ENCODE measurements at regions of chr6 and their contacts with region 1.

Region 1: DNA sequence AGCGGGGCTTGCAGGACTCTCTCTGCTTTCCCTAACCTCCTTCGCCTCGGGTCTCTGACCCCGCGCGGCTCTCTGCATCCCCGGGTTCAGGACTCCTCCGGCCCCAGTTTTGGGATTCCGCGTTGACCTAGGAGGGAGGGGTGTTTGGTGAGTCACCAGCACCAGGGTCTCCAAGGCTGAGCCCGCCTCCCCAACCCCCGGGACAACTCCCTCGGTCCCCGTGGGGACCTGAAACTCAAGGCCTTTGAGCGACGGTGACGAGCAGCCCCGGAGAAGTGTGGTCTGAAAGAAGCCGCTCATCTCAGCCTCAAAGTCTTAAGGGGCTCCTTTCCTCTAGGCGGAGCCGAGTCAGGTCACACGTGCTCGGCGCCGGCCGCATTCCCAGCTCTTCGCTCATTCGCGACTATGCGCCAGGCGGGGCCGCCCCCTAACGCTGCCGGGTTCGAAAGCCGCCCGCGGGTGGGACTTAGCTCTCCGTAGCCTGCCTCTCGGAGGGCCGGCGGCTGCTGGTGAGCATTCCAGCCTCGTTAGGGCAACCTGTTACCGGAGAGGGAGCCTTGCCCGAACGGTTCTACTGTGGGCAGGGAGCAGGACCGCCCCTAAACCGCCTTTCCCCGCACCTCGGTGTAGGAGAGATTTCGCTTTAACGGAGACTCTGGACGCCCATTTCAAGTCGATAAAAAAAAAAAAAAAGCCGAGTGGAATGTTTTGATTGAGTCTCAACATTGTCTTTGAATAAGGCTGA is 3.0 kb upstream of the PRDM13 start:
- DNase-seq: peak in 1 of 2 donors; percentile 54
- ATAC-seq: peak; percentile 31 to 59 (median 46)
- H3K4me3 ChIP-seq: peak overlapping the region; percentile 13
- H3K4me3 Mint-ChIP-seq: peak overlapping the region; percentile 80
- H3K27ac ChIP-seq: no peak overlapping the region
- H3K27ac Mint-ChIP-seq: no peak overlapping the region
- H3K4me1 ChIP-seq: peaks cover 38% of the 10 kb centered on the region
- H3K4me1 Mint-ChIP-seq: peaks cover 34 to 35% of the 10 kb centered on the region in 2 donors
- H3K27me3 ChIP-seq: peaks cover 80% of the 10 kb centered on the region
- H3K27me3 Mint-ChIP-seq: peaks cover 80 to 94% of the 10 kb centered on the region in 2 donors
- CTCF ChIP-seq: no peak

Region 2: DNA sequence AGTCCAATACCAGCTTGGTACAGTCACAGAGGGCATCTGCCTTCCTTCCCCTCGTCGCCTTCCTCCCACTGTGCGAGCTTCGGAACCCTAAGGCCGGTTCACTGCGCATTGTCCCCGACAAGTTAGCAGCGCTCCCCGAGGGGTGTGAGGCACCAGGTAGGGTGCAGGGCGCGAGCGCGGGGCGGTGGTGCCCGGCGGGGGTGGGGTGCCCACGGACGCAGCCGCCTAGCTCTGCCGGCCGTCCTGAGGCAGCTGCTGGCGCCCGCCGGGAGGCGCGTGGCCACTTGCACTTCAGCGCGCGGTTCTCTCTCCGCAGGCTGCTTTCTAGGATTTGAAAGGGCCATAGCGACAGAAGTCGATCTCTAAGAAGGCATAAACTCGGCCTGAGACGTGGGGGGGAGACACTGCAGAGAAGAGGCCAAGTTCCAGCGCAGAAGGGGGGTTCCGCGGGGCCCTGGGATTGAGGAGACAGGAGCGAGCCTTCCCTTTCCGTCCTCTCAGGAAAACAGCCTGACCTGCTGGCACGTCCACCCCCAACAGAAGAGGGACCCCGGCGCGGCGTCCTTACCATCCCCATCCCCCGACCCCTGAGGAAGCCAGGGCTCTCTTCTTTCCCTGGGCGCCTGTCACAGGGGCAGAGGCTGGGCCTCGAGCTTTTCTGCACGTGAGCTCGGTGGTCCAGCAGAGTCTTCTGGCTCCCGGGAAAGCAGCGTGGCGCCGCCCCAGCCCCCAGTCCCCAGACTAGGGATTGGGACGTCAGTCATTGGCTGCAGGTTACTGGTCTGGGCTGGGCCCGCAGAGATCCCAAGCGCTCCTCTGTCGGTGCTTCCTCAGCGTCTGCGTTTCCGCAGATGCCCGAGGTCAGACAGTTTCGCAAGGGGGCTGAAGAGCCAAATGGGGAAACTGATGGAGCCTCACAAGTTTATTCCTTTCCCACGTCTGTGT is 12.6 kb before region 1 on chr6:
- intact Hi-C with region 1: loop called (anchors 2 kb)
- DNase-seq: peak in 1 of 2 donors; percentile 23
- ATAC-seq: no peak
- H3K4me3 ChIP-seq: no peak overlapping the region
- H3K4me3 Mint-ChIP-seq: no peak overlapping the region
- H3K27ac ChIP-seq: no peak overlapping the region
- H3K27ac Mint-ChIP-seq: no peak overlapping the region
- H3K4me1 ChIP-seq: peaks cover 21% of the 10 kb centered on the region
- H3K4me1 Mint-ChIP-seq: peaks cover 8 to 10% of the 10 kb centered on the region in 2 donors
- H3K27me3 ChIP-seq: peaks cover 66% of the 10 kb centered on the region
- H3K27me3 Mint-ChIP-seq: peaks cover 62 to 75% of the 10 kb centered on the region in 2 donors
- CTCF ChIP-seq: no peak

Region 3: DNA sequence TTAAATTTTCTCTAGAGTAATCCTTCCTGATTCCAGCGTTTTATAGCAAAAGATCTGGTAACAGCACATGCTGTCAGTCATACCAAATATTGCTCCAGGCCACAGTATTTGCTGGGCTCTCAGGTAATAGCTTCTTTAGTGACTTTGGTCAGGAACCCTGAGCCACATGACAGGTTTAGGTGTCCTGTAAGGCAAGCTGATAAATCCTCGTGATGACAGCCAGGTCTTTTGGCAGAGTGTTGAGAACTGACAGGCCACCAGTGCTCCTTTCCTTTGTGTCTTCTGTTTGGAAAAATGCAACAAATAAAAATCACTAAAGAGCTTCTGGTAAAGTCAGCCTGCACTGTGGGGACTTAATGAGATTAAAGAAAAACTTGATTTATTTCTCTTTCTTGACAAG is 37.7 kb after region 1 on chr6:
- intact Hi-C with region 1: no loop called
- DNase-seq: no peak
- ATAC-seq: no peak
- H3K4me3 ChIP-seq: no peak overlapping the region
- H3K4me3 Mint-ChIP-seq: no peak overlapping the region
- H3K27ac ChIP-seq: no peak overlapping the region
- H3K27ac Mint-ChIP-seq: no peak overlapping the region
- H3K4me1 ChIP-seq: no peaks in the 10 kb centered on the region
- H3K4me1 Mint-ChIP-seq: no peaks in the 10 kb centered on the region
- H3K27me3 ChIP-seq: peaks cover 6% of the 10 kb centered on the region
- H3K27me3 Mint-ChIP-seq: peaks cover 13 to 37% of the 10 kb centered on the region in 2 donors
- CTCF ChIP-seq: no peak